Activated CD4-positive, alpha-beta memory T cell treated with anti-CD3 and anti-CD28 coated beads for 36 hours (primary cell): ENCODE measurements at regions of chr3 and their contacts with region 1.

Region 1: DNA sequence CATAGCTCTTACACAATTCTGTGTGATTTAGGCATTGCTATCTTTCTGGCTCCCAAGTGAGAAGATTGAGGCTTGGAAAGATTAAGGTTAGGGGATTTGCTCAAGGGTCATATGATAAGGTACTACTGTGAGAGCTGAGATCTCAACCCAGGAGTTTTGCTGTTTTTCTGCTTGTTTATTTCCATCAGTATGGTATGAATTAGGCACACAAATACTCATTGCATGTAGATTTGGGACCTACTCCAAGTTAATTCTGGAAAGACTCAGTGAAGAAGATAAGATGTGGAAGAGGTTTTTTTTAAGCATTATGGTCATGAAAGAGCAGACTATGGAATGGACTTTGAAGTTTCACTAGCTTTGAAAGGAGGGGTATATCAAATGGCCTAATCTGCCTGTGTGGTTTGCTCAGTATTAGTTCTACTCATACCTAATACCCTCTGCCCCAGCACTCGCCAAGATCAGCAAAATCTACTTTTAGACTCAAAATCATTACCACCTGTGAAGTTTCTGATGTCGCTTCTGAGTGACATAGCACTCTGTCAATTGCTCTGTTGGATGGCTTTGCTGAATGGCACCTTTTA is 12.5 kb downstream of the MBNL1 start:
- DNase-seq: no peak
- H3K4me3 Mint-ChIP-seq: peak overlapping the region; percentile 50
- H3K27ac Mint-ChIP-seq: peak overlapping the region; percentile 70
- H3K4me1 Mint-ChIP-seq: peaks cover 75% of the 10 kb centered on the region
- H3K27me3 Mint-ChIP-seq: no peaks in the 10 kb centered on the region

Region 2: GRCh38 chr3:152205097-152205593 is 76.1 kb before region 1 on chr3:
- CTCF ChIA-PET with region 1: no interaction called
- POLR2A ChIA-PET with region 1: interaction called, 12 read pairs
- intact Hi-C with region 1: no loop called
- DNase-seq: no peak
- H3K4me3 Mint-ChIP-seq: peak overlapping the region; percentile 79
- H3K27ac Mint-ChIP-seq: peak overlapping the region; percentile 89
- H3K4me1 Mint-ChIP-seq: peaks cover 58% of the 10 kb centered on the region
- H3K27me3 Mint-ChIP-seq: no peaks in the 10 kb centered on the region

Region 3: DNA sequence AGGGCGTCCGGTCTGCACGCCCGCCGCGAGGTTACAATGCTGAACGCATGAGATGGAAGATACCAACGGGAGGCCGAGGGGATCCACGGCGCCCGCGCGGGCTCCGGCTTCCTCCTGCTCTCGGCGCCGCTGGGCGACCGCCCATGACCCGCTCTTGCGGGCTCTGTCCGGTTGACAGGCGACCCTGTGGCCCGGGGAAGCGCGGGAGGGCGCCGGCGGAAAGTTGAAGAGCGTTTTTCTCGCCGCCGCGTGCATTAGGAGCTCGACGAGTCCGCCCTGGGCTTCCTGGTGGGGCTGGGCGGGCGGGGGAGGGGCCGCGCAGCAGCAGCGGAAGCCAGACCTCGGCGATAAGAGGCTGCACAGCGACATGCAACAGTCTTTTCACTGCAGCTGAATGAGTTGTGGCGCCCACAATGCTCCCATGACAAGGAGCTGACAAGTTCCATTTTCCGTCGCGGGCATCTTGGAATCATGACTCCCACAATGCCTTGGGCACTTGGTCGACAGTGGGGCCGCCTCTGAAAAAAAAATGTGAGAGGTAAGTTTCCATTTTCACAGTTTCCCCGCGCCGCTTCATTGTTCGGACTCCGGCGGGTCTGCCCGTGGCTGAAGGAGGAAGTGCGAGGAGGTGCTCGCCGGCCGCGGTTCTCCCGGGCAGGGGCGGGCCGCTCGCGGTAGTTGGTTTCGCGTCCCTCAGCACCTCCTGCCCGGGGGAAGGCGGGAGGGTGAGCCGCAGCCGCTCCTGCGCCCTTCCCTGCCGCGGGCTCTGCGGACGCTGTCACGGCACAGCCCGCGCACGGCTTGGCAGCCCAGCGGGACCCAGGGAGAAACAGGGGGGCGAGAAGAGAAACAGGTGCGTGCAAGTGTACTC is 12.4 kb before region 1 on chr3 and contains the start of gene MBNL1:
- CTCF ChIA-PET with region 1: interaction called, 7 read pairs
- POLR2A ChIA-PET with region 1: interaction called, 109 read pairs
- intact Hi-C with region 1: loop called (anchors 1 kb)
- DNase-seq: peak; percentile 93
- H3K4me3 Mint-ChIP-seq: peak within 1 kb of the TSS; percentile 84
- H3K27ac Mint-ChIP-seq: peak within 1 kb of the TSS; percentile 84
- H3K4me1 Mint-ChIP-seq: peaks cover 52% of the 10 kb centered on the region
- H3K27me3 Mint-ChIP-seq: no peaks in the 10 kb centered on the region
- total RNA-seq, gene MBNL1: 290 to 302 TPM

Region 4: GRCh38 chr3:152291649-152292066 is 10.4 kb after region 1 on chr3:
- CTCF ChIA-PET with region 1: interaction called, 3 read pairs
- POLR2A ChIA-PET with region 1: interaction called, 109 read pairs
- intact Hi-C with region 1: loop called (anchors 1 kb)
- DNase-seq: no peak
- H3K4me3 Mint-ChIP-seq: peak overlapping the region; percentile 27
- H3K27ac Mint-ChIP-seq: peak overlapping the region; percentile 62
- H3K4me1 Mint-ChIP-seq: peaks cover 76% of the 10 kb centered on the region
- H3K27me3 Mint-ChIP-seq: no peaks in the 10 kb centered on the region

Region 5: GRCh38 chr3:152298393-152299242 is 17.4 kb after region 1 on chr3:
- CTCF ChIA-PET with region 1: no interaction called
- POLR2A ChIA-PET with region 1: interaction called, 10 read pairs
- intact Hi-C with region 1: loop called (anchors 1 kb)
- DNase-seq: peak; percentile 59
- H3K4me3 Mint-ChIP-seq: peak overlapping the region; percentile 75
- H3K27ac Mint-ChIP-seq: peak overlapping the region; percentile 90
- H3K4me1 Mint-ChIP-seq: peaks cover 74% of the 10 kb centered on the region
- H3K27me3 Mint-ChIP-seq: no peaks in the 10 kb centered on the region

Region 6: DNA sequence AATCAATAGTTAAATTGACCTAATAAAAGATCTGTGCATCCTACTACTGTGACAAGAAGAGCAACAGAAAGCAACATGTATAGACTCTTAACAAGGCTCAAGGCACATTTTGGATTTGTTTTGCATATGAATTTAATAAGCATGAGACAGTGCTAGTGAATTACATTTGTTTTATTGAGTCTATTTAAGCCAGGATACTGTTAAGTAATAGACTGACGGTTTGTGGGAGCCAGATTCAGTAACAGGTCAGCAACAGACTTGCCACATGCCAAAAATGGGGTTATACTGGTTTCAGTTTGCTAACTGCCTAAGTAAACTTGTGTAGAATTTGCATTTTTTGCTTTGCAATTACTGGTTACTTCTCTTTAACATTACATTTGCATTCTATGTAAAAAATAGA is 41.5 kb after region 1 on chr3:
- CTCF ChIA-PET with region 1: no interaction called
- POLR2A ChIA-PET with region 1: no interaction called
- intact Hi-C with region 1: loop called (anchors 2 kb)
- DNase-seq: no peak
- H3K4me3 Mint-ChIP-seq: no peak overlapping the region
- H3K27ac Mint-ChIP-seq: peak overlapping the region; percentile 24
- H3K4me1 Mint-ChIP-seq: peaks cover 82% of the 10 kb centered on the region
- H3K27me3 Mint-ChIP-seq: no peaks in the 10 kb centered on the region

Region 7: DNA sequence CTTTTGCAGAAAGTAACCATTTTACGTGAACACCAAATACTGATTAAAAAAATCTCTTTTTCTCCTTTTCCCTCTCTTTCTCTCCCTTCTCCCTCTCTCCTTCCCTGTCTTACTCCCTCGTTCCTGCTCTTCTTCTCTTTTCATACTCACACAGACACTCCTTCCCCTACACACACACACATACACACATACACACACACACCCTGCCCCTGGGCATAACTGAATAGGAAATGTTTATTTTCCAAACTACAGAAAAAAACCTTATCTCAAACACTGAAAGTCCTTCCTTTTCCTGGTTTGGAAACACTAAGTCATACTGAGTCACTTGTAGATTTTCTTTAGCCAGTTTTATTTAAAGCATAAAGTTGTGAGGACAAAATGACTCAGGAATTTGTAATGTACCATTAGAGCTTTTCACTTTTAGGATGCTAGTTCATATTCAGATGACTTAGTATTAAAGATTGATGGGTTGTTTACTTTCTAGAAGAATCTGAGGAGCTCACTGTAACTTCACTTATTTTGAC is 49.9 kb after region 1 on chr3:
- CTCF ChIA-PET with region 1: no interaction called
- POLR2A ChIA-PET with region 1: no interaction called
- intact Hi-C with region 1: loop called (anchors 2 kb)
- DNase-seq: no peak
- H3K4me3 Mint-ChIP-seq: no peak overlapping the region
- H3K27ac Mint-ChIP-seq: peak overlapping the region; percentile 66
- H3K4me1 Mint-ChIP-seq: peaks cover 87% of the 10 kb centered on the region
- H3K27me3 Mint-ChIP-seq: no peaks in the 10 kb centered on the region